PC-3 (cell line): ENCODE measurements at regions of chr11 and their contacts with region 1.

Region 1: GRCh38 chr11:8070417-8071115 is 10.4 kb upstream of the TUB start:
- DNase-seq: peak; percentile 50
- ATAC-seq: peak; percentile 57
- H3K4me3 ChIP-seq: no peak overlapping the region
- H3K27ac ChIP-seq: no peak overlapping the region
- H3K4me1 ChIP-seq: peaks cover 16% of the 10 kb centered on the region
- H3K27me3 ChIP-seq: peaks cover 16% of the 10 kb centered on the region
- CTCF ChIP-seq: peak; percentile 58

Region 2: GRCh38 chr11:7257724-7258123 is 812.8 kb before region 1 on chr11:
- CTCF ChIA-PET with region 1: no interaction called
- POLR2A ChIA-PET with region 1: no interaction called
- intact Hi-C with region 1: no loop called
- DNase-seq: no peak
- ATAC-seq: no peak
- H3K4me3 ChIP-seq: no peak overlapping the region
- H3K27ac ChIP-seq: no peak overlapping the region
- H3K4me1 ChIP-seq: no peaks in the 10 kb centered on the region; the same call in 1 of the 2 replicates
- H3K27me3 ChIP-seq: no peaks in the 10 kb centered on the region
- CTCF ChIP-seq: no peak

Region 3: DNA sequence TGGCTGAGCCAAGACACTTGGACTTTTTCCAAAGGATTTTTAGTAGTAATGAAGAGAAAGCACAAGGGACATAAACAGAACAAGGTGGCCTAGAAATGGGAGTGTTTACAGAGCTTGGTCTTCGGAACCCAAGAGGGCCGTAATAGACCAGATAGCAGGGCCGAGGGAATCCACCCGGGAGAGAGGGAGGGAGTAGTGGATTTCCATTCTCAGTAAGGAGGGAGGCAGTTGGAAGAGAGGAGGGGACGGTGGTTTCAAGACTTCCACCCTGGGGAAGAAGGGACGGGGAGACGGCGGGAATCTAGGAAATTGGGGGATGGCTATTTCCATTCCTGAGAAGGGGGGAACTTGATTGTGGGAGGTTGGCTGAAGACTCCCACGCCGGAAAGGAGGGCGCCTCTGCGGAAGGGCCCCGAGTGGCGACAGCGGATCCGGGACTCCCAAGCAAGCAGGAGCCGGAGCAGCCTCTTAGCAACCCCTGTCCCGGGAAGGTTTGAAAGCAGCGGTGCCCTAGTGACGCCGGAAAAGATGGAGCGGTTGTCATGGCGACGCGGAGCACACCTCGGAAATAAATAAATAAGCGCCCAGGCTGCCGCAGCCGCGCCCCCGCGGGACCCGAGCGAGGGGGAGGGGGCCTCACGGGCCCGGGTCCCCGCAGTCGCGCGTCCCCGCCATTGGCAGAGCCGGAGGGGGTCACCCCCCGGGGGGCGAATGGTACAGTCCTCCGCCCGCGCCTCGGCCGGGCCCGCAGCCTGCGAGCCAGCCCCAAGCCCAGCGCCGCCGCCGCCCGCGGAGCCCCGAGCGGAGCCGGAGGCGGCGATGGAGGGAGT is 51.9 kb before region 1 on chr11:
- CTCF ChIA-PET with region 1: no interaction called
- POLR2A ChIA-PET with region 1: no interaction called
- intact Hi-C with region 1: no loop called
- DNase-seq: peak; percentile 36
- ATAC-seq: peak; percentile 47
- H3K4me3 ChIP-seq: peak overlapping the region; percentile 64
- H3K27ac ChIP-seq: no peak overlapping the region
- H3K4me1 ChIP-seq: no peaks in the 10 kb centered on the region; the same call in 1 of the 2 replicates
- H3K27me3 ChIP-seq: peaks cover 46% of the 10 kb centered on the region
- CTCF ChIP-seq: no peak

Region 4: GRCh38 chr11:8033305-8034105 is 37.1 kb before region 1 on chr11:
- CTCF ChIA-PET with region 1: interaction called, 3 read pairs
- POLR2A ChIA-PET with region 1: no interaction called
- intact Hi-C with region 1: loop called (anchors 1 kb)
- DNase-seq: peak; percentile 69
- ATAC-seq: peak; percentile 85
- H3K4me3 ChIP-seq: no peak overlapping the region
- H3K27ac ChIP-seq: no peak overlapping the region
- H3K4me1 ChIP-seq: no peaks in the 10 kb centered on the region
- H3K27me3 ChIP-seq: peaks cover 33% of the 10 kb centered on the region
- CTCF ChIP-seq: peak; percentile 79